ENCODE measurements at regions of chr19 and their contacts with region 1.

Region 1: GRCh38 chr19:38693380-38694223 is 46.2 kb downstream of the ACTN4 start:
- DNase-seq: peak; percentile 58 to 75
- ATAC-seq: peak; percentile 74 to 88 (median 85)
- H3K4me3 ChIP-seq: peak overlapping the region; percentile 10
- H3K4me3 Mint-ChIP-seq: peak overlapping the region; percentile 75
- H3K27ac ChIP-seq: peak overlapping the region; percentile 81
- H3K27ac Mint-ChIP-seq: peak overlapping the region; percentile 89 to 93
- H3K4me1 ChIP-seq: peaks cover 94% of the 10 kb centered on the region
- H3K4me1 Mint-ChIP-seq: peaks cover 86 to 91% of the 10 kb centered on the region in 2 donors
- H3K27me3 ChIP-seq: no peaks in the 10 kb centered on the region
- H3K27me3 Mint-ChIP-seq: no peaks in the 10 kb centered on the region
- CTCF ChIP-seq: no peak

Region 2: GRCh38 chr19:38658462-38659306 is 34.9 kb before region 1 on chr19:
- intact Hi-C with region 1: loop called (anchors 5 kb)
- DNase-seq: no peak
- ATAC-seq: no peak
- H3K4me3 ChIP-seq: no peak overlapping the region
- H3K4me3 Mint-ChIP-seq: peak overlapping the region; percentile 69
- H3K27ac ChIP-seq: peak overlapping the region; percentile 39
- H3K27ac Mint-ChIP-seq: peak overlapping the region; percentile 85 to 88
- H3K4me1 ChIP-seq: peaks cover 87% of the 10 kb centered on the region
- H3K4me1 Mint-ChIP-seq: peaks cover 77 to 83% of the 10 kb centered on the region in 2 donors
- H3K27me3 ChIP-seq: no peaks in the 10 kb centered on the region
- H3K27me3 Mint-ChIP-seq: no peaks in the 10 kb centered on the region
- CTCF ChIP-seq: no peak

Region 3: DNA sequence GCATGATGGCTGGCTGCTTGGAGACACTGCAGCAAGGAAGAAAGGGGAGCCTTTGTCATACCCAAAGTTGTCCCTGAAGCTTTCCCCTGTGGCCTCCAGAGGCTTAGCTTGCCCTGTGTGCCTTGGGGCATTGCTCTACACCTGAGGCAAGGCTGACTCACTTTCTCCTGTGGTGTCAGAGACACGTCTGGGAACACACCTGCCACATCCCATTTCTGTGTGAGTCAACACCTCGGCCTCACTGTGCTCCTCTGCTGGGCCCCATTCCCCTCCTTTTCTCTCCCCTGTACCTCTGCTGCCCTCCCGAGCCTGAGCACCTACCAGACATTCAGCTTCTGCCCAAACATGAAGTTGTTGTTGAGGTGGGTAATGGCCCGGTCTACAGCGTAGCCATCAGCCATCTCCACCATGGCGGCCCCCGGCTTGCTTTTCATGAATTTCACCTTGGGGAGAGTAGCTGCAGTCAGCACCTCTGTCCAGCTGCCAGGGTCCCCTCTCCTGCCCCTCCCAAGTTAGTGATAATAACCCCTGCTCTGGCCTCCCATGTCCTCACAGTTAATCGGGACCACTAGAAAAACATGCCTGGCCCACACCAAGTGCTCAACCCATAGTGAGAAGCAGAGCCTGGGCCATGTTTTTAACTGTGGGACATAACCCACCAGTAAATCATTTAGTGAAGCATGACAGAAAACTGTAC is 145.1 kb after region 1 on chr19:
- intact Hi-C with region 1: no loop called
- DNase-seq: no peak
- ATAC-seq: no peak
- H3K4me3 ChIP-seq: no peak overlapping the region
- H3K4me3 Mint-ChIP-seq: no peak overlapping the region
- H3K27ac ChIP-seq: no peak overlapping the region
- H3K27ac Mint-ChIP-seq: peak overlapping the region in 1 of 2 donors; percentile 47
- H3K4me1 ChIP-seq: peaks cover 30% of the 10 kb centered on the region
- H3K4me1 Mint-ChIP-seq: peaks cover 22 to 43% of the 10 kb centered on the region in 2 donors
- H3K27me3 ChIP-seq: no peaks in the 10 kb centered on the region
- H3K27me3 Mint-ChIP-seq: no peaks in the 10 kb centered on the region
- CTCF ChIP-seq: no peak